ENCODE measurements at regions of chrX and their contacts with region 1.

Region 1: GRCh38 chrX:87664381-87664780 is 146.8 kb downstream of the KLHL4 start:
- DNase-seq: no peak
- H3K4me3 ChIP-seq: no peak overlapping the region
- H3K27ac ChIP-seq: no peak overlapping the region
- H3K4me1 ChIP-seq: no peaks in the 10 kb centered on the region
- H3K27me3 ChIP-seq: no peaks in the 10 kb centered on the region
- CTCF ChIP-seq: peak; percentile 58

Region 2: GRCh38 chrX:87338510-87338909 is 325.9 kb before region 1 on chrX:
- intact Hi-C with region 1: loop called (anchors 5 kb)
- DNase-seq: no peak
- H3K4me3 ChIP-seq: no peak overlapping the region
- H3K27ac ChIP-seq: no peak overlapping the region
- H3K4me1 ChIP-seq: no peaks in the 10 kb centered on the region
- H3K27me3 ChIP-seq: no peaks in the 10 kb centered on the region
- CTCF ChIP-seq: peak; percentile 48